ENCODE measurements at regions of chr19 and their contacts with region 1.

Region 1: GRCh38 chr19:36528194-36528920 is at the start of gene ZNF260:
- DNase-seq: peak; percentile 98 to 99
- ATAC-seq: peak; percentile 98 to 99 (median 99)
- H3K4me3 ChIP-seq: peak within 1 kb of the TSS; percentile 44 to 70 (median 64)
- H3K27ac ChIP-seq: peak within 1 kb of the TSS; percentile 68 to 95 (median 91)
- H3K4me1 ChIP-seq: peaks cover 0 to 28% (median 19%) of the 10 kb centered on the region in 9 donors
- H3K27me3 ChIP-seq: no peaks in the 10 kb centered on the region
- CTCF ChIP-seq: peak in 1 of 9 donors; percentile 10
- total RNA-seq, gene ZNF260: 7.2 to 12.8 (median 8.7) TPM

Region 2: DNA sequence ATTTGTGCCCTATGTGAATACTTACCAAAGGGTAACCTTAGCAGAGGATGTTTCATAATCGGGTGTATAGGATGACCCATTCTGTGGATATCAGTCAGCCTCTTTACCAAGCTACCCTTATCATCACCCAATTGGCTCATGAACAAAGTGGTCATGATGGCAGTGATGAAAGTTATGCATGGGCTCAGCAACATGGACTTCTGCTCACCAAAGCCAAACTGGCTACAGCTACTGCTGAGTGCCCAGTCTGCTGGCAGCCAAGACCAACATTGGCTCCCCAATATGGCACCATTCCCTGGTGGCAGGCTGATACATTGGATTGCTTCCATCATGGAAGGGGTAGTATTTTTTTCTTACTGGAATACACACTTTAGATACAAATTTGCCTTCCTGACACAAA is 144.0 kb after region 1 on chr19:
- intact Hi-C with region 1: loop called in 1 of 10 experiments (anchors 10 kb)
- DNase-seq: no peak
- ATAC-seq: peak in 6 of 8 donors; percentile 38 to 72 (median 45)
- H3K4me3 ChIP-seq: no peak overlapping the region
- H3K27ac ChIP-seq: no peak overlapping the region
- H3K4me1 ChIP-seq: peaks cover 0 to 28% (median 10%) of the 10 kb centered on the region in 9 donors
- H3K27me3 ChIP-seq: no peaks in the 10 kb centered on the region
- CTCF ChIP-seq: no peak